Colonic mucosa (tissue), 4 donors: ENCODE measurements at regions of chr11 and their contacts with region 1.

Region 1: DNA sequence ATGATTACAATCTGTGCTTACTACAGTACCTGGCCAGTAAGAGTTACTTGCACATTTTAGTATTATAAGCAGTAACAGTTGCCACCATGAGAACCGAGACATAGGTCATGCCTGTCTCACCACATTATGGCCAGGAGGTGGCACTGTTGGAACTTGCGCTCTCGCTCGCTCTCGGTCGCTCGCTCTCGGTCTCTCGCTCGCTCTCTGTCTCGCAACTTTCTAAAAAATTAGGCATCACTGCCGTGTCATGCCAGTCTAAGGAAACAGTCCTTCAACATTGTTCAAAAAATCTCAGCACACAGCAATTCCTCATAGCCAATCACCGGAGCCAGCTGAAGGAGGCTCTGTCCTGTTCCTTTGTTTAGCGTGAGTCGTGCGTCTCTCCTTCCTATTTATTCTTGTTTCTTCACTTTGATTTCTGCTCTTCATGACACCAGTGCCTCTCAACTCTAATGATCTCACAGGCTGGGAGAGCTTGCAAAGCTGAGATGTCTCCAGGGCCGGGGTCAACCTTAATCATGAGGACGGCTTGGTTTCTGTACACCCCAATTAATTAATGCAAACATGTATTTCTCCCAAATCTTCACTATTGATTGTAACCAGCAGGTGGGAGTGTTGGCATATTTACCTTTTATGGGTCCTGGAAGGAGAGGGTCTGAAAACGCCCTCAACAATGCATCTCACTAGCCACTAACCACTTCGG is 6.3 kb upstream of the ADAMTS8 start:
- DNase-seq: peak; percentile 80
- H3K4me3 ChIP-seq: peak overlapping the region; percentile 39
- H3K27ac ChIP-seq: no peak overlapping the region
- H3K4me1 ChIP-seq: no peaks in the 10 kb centered on the region
- H3K27me3 ChIP-seq: peaks cover 5% of the 10 kb centered on the region
- CTCF ChIP-seq: peak; percentile 80

Region 2: DNA sequence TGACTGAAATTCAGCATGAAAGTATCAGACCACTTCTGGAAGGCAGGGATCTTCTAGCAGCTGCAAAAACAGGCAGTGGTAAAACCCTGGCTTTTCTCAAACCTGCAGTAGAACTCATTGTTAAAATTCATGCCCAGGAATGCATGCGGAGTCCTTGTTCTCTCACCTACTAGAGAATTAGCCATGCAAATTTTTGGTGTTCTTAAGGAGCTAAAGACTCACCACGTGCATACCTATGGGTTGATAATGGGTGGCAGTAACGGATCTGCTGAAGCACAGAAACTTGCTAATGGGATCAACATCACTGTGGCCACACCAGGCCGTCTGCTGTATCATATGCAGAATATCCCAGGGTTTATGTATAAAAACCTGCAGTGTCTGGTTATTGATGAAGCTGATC is 139.0 kb before region 1 on chr11:
- intact Hi-C with region 1: no loop called
- DNase-seq: no peak
- H3K4me3 ChIP-seq: no peak overlapping the region
- H3K27ac ChIP-seq: no peak overlapping the region
- H3K4me1 ChIP-seq: no peaks in the 10 kb centered on the region
- H3K27me3 ChIP-seq: no peaks in the 10 kb centered on the region
- CTCF ChIP-seq: no peak

Region 3: DNA sequence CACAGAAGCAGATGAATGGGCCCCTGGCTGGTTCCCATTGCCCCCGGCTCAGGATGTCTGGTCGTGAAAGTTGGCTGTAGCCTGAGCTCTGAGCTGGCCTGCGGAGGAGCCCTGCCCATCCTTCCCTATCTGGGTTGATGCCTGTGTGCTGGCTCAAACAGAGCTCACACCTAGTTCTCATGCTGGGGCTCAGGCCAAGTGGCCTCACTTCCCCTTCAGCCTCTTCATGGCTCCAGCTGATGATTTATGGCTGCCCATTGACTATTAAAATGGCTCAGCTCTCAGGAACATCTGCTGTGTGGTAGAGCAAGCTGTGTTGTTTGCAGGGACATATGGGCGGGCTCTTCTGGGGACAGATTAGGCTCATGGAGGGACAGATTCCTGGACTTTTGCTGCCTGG is 78.5 kb after region 1 on chr11:
- intact Hi-C with region 1: no loop called
- DNase-seq: peak; percentile 53
- H3K4me3 ChIP-seq: no peak overlapping the region
- H3K27ac ChIP-seq: no peak overlapping the region
- H3K4me1 ChIP-seq: no peaks in the 10 kb centered on the region
- H3K27me3 ChIP-seq: no peaks in the 10 kb centered on the region
- CTCF ChIP-seq: no peak

Region 4: GRCh38 chr11:130861902-130862860 is 427.5 kb after region 1 on chr11:
- intact Hi-C with region 1: loop called (anchors 2 kb)
- DNase-seq: peak; percentile 92
- H3K4me3 ChIP-seq: no peak overlapping the region
- H3K27ac ChIP-seq: no peak overlapping the region
- H3K4me1 ChIP-seq: no peaks in the 10 kb centered on the region
- H3K27me3 ChIP-seq: no peaks in the 10 kb centered on the region
- CTCF ChIP-seq: peak; percentile 99

Region 5: DNA sequence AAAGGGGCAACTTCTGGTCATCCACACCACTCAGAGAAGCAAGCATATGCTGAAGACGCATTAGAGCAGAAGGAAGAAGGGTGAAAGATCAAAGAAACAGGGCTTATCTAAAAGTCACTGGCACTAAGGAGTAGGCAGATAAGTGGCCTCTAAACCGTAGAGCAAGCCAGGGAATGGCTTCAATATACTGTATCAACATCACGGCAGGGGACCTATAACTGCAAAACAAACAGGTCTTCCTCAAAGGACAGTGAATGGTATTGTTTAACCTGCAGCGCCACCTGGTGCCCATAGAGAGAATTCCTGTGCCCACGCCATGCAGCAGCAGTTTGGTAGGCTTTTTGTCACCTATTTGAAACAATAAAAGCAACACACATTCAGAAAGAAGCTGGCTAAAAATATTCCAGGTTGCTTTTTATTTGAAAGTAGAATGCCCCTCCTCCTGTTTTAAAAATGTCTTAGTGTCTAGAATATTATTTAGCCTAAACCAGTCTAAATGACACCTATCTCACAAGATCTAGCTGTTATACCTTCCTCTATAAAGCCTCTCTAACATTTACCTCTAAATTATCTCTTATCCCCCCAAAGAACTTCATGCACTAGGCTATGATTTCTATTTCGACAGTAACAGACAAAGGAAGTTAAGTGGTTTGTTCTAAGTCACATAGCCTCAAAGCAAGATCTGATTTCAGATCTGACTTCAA is 459.8 kb after region 1 on chr11:
- intact Hi-C with region 1: loop called (anchors 10 kb)
- DNase-seq: peak; percentile 73
- H3K4me3 ChIP-seq: no peak overlapping the region
- H3K27ac ChIP-seq: no peak overlapping the region
- H3K4me1 ChIP-seq: no peaks in the 10 kb centered on the region
- H3K27me3 ChIP-seq: no peaks in the 10 kb centered on the region
- CTCF ChIP-seq: peak; percentile 90

Region 6: GRCh38 chr11:132114185-132114584 is 1679.5 kb after region 1 on chr11:
- intact Hi-C with region 1: no loop called
- DNase-seq: no peak
- H3K4me3 ChIP-seq: no peak overlapping the region
- H3K27ac ChIP-seq: no peak overlapping the region
- H3K4me1 ChIP-seq: no peaks in the 10 kb centered on the region
- H3K27me3 ChIP-seq: no peaks in the 10 kb centered on the region
- CTCF ChIP-seq: peak; percentile 28